Endothelial cell of umbilical vein (primary cell): ENCODE measurements at regions of chr18 and their contacts with region 1.

Region 1: DNA sequence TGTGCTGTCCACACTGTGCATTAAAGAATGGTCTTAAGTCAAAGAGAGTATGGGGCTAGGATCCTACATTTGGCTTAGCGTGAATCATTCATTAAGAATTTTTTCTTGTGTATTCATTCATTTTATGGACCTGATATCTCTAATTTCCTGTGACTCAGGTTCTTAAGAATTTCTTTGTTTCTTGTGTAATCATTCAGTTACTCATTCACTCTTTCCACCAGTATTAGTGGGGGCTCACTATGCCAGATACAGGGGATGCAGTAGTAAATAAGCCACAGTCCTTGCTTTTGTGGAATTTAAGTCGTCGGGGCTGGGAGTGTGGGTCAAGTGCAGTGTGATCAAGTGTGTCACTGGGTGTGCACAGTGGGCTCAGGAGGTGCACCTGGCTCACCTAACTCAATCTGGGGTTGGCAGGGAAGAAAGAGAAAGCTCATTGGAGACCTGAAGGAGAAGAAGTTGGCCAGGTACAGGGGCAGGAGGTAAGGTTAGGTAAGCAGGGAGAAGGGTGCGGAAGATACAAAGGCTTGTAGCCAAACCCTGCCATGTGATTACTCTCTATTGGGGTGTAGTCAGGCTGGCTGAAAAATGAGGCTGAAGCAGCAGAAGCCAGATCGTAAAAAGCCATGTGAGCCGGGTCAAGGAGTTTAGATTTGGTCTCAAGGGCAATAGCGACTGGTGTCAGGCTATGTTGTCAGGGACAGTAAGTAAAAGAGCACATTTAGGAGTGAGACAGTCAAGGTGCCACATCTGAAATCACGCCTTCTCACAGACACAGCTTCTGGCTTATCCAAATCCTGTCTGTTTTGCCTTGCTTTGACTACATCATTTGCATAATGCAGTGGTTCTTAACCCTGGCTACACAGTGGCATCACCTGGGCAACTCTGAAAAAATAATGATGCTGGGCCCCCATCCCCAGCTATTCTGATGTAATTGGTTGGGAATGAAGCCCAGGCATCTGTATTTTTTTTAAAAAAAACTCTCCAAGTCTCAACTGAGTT is 67.2 kb downstream of the KCTD1 start:
- DNase-seq: peak; percentile 92
- H3K4me3 ChIP-seq: no peak overlapping the region
- H3K27ac ChIP-seq: peak overlapping the region; percentile 92
- H3K4me1 ChIP-seq: peaks cover 31% of the 10 kb centered on the region
- H3K27me3 ChIP-seq: no peaks in the 10 kb centered on the region
- CTCF ChIP-seq: no peak
- POLR2A ChIP-seq: no peak

Region 2: DNA sequence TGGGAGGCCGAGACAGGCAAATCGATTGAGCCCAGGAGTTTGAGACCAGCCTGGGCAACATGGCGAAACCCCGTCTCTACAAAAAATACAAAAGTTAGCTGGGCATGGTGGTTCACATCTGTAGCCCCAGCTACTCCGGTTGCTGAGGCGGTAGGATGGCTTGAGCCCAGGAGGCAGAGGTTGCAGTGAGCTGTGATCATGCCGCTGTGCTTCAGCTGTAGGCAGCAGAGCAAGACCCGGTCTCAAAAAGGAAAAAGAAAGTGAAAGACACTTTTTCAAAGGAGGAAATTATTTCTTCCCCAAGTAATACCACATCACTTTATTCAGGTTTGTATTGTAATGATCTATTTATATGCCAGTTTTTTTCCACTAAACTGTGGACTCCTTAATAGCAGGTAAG is 290.7 kb before region 1 on chr18:
- CTCF ChIA-PET with region 1: no interaction called
- POLR2A ChIA-PET with region 1: no interaction called
- dilution Hi-C with region 1: no loop called
- intact Hi-C with region 1: no loop called
- DNase-seq: no peak
- H3K4me3 ChIP-seq: no peak overlapping the region
- H3K27ac ChIP-seq: no peak overlapping the region
- H3K4me1 ChIP-seq: no peaks in the 10 kb centered on the region
- H3K27me3 ChIP-seq: no peaks in the 10 kb centered on the region
- CTCF ChIP-seq: no peak
- POLR2A ChIP-seq: no peak

Region 3: DNA sequence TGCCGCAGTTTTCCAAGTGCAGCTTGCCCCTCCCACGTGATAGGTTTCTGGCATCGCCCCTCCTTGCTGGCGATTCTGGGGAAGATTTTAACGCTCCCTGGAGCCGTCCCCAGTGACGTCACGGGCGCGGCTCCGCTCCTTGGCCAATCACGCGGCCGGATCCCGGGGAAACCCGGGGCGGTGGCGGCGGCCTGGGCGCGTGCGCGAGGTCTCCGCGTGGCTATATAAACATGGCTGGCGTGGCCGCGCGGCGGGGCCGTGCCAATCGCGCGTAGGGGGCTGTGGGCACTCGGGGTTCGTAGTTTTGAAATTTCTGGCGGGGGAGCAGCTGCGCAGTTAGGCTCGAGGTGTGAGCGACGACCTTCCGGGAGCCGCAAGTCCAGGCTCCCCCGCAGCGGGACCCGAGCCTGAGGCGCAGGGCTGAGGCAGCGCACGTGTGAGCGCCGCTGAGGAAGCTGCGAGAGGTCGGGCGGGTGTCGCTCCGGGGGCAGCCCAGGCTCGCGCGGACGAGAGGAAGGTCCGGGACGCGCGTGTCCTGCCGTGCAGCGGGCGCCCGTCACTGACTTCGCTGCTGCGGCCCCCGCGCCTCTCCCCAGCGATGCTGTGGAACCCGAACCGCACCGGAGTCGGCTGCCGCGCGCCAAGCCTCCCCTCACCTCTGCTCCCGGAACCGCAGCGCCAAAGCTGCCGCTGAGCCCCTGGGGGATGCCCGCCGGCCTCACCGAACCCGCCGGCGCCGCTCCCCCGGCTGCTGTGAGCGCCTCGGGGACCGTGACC is 254.8 kb before region 1 on chr18 and contains the start of gene TAF4B:
- CTCF ChIA-PET with region 1: no interaction called
- POLR2A ChIA-PET with region 1: no interaction called
- dilution Hi-C with region 1: no loop called
- intact Hi-C with region 1: no loop called
- DNase-seq: peak; percentile 93
- H3K4me3 ChIP-seq: peak within 1 kb of the TSS; percentile 70 to 85 (median 75)
- H3K27ac ChIP-seq: peak within 1 kb of the TSS; percentile 28
- H3K4me1 ChIP-seq: peaks cover 11% of the 10 kb centered on the region
- H3K27me3 ChIP-seq: peaks cover 6 to 13% of the 10 kb centered on the region in 2 experiments
- CTCF ChIP-seq: no peak
- POLR2A ChIP-seq: no peak
- total RNA-seq, gene TAF4B: 1.2 and 2.0 TPM in 2 replicates

Region 4: GRCh38 chr18:26468931-26469340 is 12.3 kb before region 1 on chr18:
- CTCF ChIA-PET with region 1: interaction called, 18 read pairs
- POLR2A ChIA-PET with region 1: no interaction called
- dilution Hi-C with region 1: no loop called
- intact Hi-C with region 1: no loop called
- DNase-seq: peak; percentile 26
- H3K4me3 ChIP-seq: no peak overlapping the region
- H3K27ac ChIP-seq: no peak overlapping the region
- H3K4me1 ChIP-seq: no peaks in the 10 kb centered on the region
- H3K27me3 ChIP-seq: no peaks in the 10 kb centered on the region
- CTCF ChIP-seq: peak; percentile 52 to 64
- POLR2A ChIP-seq: no peak